Activated naive CD4-positive, alpha-beta T cell treated with anti-CD3 and anti-CD28 coated beads, Interleukin-2, amount 10 ng/mL, durations not matched to agents 7 days and 5 days (primary cell): ENCODE measurements at regions of chr7 and their contacts with region 1.

Region 1: DNA sequence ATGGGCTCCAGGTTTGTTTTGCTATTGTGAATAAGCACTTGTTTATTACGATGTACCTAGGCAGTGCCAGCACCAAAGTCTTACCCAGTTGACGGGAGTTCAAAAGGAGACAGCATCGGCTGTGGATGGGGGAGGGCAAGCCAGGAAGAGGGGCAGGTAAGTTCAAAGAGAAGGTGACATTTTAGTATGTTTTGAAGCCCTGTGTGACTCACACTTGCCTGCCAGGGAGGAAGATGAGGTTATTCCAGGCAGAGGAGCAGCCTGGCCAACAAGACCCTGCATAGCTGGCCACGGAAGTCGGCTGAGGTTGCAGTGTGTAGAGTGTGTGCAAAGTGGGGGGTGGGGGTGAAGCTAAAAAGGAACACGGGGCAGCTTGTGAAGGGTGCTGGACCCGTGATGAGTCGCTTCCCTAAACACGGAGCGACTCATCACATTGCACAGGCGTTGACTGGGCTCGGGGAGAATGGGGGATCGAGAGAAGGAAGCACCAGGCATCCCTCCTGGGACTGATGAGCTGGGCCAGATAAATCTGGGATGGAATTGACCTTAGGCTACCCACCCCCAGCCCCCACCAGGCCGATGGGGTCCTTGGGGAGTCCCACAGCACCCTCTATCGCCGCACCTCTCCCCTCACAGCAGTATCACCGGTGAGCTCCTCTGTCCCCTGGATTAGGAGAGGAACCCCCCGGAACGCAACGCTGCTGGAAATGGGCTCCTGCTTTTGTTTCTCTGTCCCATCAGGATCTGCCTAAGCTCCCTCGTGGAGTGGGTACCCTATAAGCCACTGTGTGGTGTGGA is 97.9 kb upstream of the IKZF1 start:
- DNase-seq: peak; percentile 82
- H3K4me3 Mint-ChIP-seq: peak overlapping the region; percentile 56
- H3K27ac Mint-ChIP-seq: peak overlapping the region; percentile 92
- H3K4me1 Mint-ChIP-seq: peaks cover 84% of the 10 kb centered on the region
- H3K27me3 Mint-ChIP-seq: no peaks in the 10 kb centered on the region

Region 2: DNA sequence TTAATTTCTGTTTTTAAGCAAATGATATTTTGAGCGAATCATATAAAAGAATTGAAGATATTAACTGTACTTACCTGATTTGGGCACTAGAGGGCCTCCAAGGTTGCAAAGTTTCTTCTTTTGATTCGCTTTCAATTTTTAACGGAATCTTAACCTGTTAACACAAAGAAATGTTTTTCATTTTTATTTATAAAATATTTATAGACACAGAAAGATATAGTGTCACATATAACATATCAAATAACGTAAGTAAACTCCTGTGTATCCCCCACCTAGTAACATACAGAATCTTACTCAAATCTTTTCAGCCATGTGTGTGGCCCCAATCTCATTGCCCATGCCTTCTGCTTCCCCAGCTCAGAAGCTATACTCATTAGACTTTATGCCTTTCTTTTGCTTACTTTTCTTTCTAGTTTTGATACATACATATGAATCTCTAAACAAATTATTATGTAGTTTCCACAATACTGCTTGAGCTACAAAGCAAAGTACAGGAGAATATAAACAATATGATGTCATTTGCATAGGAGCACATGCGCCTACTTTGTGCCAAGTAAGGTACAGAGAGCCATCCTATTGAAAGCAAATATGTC is 64.1 kb before region 1 on chr7:
- CTCF ChIA-PET with region 1: interaction called, 35 read pairs
- DNase-seq: peak; percentile 55
- H3K4me3 Mint-ChIP-seq: peak overlapping the region; percentile 40
- H3K27ac Mint-ChIP-seq: peak overlapping the region; percentile 47
- H3K4me1 Mint-ChIP-seq: peaks cover 48% of the 10 kb centered on the region
- H3K27me3 Mint-ChIP-seq: peaks cover 12% of the 10 kb centered on the region

Region 3: DNA sequence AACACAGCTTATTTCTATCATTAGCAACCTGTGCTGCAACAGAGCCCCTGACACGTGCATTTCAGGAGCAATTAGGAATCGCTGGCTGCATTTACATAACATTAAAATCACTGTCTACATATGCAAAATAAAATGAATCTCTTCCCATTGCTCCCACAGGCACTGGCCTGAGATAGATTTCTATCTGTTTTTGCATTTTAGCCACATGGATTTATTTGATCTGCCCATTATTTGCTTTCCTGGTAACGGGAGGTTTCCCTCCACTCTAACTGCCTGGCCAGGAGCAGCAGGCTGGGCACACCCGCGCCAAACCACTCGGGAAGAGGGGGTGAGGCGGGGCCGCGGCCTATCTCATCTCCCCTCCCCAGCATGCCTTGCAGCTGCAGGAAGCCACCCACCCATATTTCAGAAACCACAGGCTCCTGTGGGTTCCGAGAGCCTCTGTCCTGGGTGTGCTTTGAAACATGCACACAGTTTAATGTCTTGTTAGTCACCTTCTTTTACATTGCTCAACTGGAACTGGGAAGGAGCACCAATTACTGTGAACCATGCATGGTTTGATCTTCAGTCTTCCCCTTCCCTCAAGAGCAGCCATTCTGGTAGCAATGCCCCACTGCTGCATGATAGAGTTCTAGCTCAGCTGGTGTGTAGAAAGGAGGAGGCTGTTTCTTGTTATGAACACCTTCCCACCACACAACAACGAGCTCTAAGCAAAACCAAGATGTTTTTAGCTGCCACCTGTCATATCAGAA is 60.2 kb after region 1 on chr7:
- CTCF ChIA-PET with region 1: interaction called, 75 read pairs
- DNase-seq: peak; percentile 88
- H3K4me3 Mint-ChIP-seq: peak overlapping the region; percentile 64
- H3K27ac Mint-ChIP-seq: peak overlapping the region; percentile 99
- H3K4me1 Mint-ChIP-seq: peaks cover 92% of the 10 kb centered on the region
- H3K27me3 Mint-ChIP-seq: no peaks in the 10 kb centered on the region

Region 4: DNA sequence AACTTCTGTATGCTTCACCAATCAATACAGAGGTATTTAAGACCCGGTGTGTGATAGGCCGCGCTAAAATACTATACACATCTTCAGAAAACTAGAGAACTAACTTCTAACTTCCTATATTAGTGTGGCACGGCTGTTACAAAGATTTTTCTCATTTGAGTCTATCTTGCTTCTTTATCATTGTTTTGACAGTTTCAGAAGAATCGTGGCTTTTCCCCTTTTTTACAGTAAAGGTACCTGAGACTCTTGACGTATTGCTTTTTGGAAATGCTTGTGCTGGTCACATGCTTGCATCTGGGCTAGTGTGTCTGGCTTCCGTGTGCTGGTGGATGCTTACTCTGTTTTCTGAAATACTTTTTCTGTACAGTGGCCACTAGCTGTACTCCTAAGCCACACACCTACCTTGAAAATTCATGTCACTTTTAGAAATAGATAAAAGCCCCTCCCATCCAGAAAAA is 110.6 kb after region 1 on chr7:
- CTCF ChIA-PET with region 1: interaction called, 75 read pairs
- DNase-seq: peak; percentile 69
- H3K4me3 Mint-ChIP-seq: peak overlapping the region; percentile 99
- H3K27ac Mint-ChIP-seq: peak overlapping the region; percentile 99
- H3K4me1 Mint-ChIP-seq: peaks cover 96% of the 10 kb centered on the region
- H3K27me3 Mint-ChIP-seq: no peaks in the 10 kb centered on the region

Region 5: GRCh38 chr7:50359995-50360925 is 153.6 kb after region 1 on chr7:
- CTCF ChIA-PET with region 1: interaction called, 13 read pairs
- DNase-seq: peak; percentile 90
- H3K4me3 Mint-ChIP-seq: peak overlapping the region; percentile 51
- H3K27ac Mint-ChIP-seq: peak overlapping the region; percentile 95
- H3K4me1 Mint-ChIP-seq: peaks cover 99% of the 10 kb centered on the region
- H3K27me3 Mint-ChIP-seq: no peaks in the 10 kb centered on the region

Region 6: GRCh38 chr7:50418086-50418515 is 211.4 kb after region 1 on chr7:
- CTCF ChIA-PET with region 1: interaction called, 117 read pairs
- DNase-seq: peak; percentile 83
- H3K4me3 Mint-ChIP-seq: no peak overlapping the region
- H3K27ac Mint-ChIP-seq: no peak overlapping the region
- H3K4me1 Mint-ChIP-seq: peaks cover 34% of the 10 kb centered on the region
- H3K27me3 Mint-ChIP-seq: peaks cover 16% of the 10 kb centered on the region